Endothelial cell of umbilical vein (primary cell): ENCODE measurements at regions of chr4 and their contacts with region 1.

Region 1: DNA sequence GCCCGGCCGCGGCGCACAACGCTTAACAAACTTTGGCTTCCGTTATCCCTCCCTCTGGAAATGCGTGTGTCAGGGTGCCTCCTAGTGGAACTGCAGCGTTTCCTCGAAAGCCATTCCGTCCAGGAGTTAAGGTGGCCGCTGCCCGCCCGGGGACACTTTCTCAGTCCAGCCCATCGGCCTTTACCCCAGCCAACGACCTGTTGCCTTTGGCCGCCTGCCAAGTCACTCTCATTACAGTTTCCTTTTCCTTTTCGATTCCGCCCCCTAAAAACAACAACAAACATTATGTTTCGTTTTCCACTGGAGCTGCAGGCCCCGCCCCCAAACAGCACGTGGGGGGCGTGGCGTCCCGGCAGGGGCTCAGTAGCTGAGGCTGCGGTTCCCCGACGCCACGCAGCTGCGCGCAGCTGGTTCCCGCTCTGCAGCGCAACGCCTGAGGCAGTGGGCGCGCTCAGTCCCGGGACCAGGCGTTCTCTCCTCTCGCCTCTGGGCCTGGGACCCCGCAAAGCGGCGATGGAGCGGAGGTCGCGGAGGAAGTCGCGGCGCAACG is at the start of gene HERC5:
- DNase-seq: peak; percentile 97
- H3K4me3 ChIP-seq: peak within 1 kb of the TSS in 2 of 3 experiments; percentile 18 to 43
- H3K27ac ChIP-seq: no peak within 1 kb of the TSS
- H3K4me1 ChIP-seq: no peaks in the 10 kb centered on the region
- H3K27me3 ChIP-seq: peaks cover 8 to 28% of the 10 kb centered on the region in 2 experiments
- CTCF ChIP-seq: peak; percentile 52 to 70
- POLR2A ChIP-seq: no peak
- total RNA-seq, gene HERC5: 0.30 and 0.91 TPM in 2 replicates

Region 2: GRCh38 chr4:88033309-88033708 is 423.5 kb before region 1 on chr4:
- CTCF ChIA-PET with region 1: interaction called, 3 read pairs
- POLR2A ChIA-PET with region 1: no interaction called
- dilution Hi-C with region 1: no loop called
- intact Hi-C with region 1: loop called (anchors 10 kb)
- DNase-seq: peak; percentile 69
- H3K4me3 ChIP-seq: no peak overlapping the region
- H3K27ac ChIP-seq: no peak overlapping the region
- H3K4me1 ChIP-seq: no peaks in the 10 kb centered on the region
- H3K27me3 ChIP-seq: no peaks in the 10 kb centered on the region
- CTCF ChIP-seq: peak; percentile 43 to 55
- POLR2A ChIP-seq: no peak

Region 3: DNA sequence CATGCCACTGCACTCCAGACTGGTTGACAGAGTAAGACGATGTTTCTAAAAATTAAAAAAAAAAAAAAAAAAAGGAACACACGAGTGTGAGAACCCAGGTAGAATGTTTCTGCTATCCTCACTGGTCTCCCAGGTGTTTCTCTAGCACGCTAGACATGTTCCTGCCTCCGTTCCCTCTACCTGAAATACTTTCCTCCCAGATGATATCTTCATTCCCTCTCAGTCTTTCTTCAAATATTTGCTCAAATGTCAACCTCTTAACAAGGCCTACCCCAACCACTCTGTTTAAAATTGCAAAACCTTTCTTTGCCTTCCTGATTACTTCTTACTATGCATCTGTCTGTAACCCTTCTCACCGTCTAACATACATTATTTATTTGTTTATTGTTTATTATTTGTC is 238.9 kb before region 1 on chr4:
- CTCF ChIA-PET with region 1: interaction called, 49 read pairs
- POLR2A ChIA-PET with region 1: no interaction called
- dilution Hi-C with region 1: no loop called
- intact Hi-C with region 1: loop called (anchors 1 kb)
- DNase-seq: no peak
- H3K4me3 ChIP-seq: no peak overlapping the region
- H3K27ac ChIP-seq: no peak overlapping the region
- H3K4me1 ChIP-seq: no peaks in the 10 kb centered on the region
- H3K27me3 ChIP-seq: no peaks in the 10 kb centered on the region
- CTCF ChIP-seq: no peak
- POLR2A ChIP-seq: no peak

Region 4: DNA sequence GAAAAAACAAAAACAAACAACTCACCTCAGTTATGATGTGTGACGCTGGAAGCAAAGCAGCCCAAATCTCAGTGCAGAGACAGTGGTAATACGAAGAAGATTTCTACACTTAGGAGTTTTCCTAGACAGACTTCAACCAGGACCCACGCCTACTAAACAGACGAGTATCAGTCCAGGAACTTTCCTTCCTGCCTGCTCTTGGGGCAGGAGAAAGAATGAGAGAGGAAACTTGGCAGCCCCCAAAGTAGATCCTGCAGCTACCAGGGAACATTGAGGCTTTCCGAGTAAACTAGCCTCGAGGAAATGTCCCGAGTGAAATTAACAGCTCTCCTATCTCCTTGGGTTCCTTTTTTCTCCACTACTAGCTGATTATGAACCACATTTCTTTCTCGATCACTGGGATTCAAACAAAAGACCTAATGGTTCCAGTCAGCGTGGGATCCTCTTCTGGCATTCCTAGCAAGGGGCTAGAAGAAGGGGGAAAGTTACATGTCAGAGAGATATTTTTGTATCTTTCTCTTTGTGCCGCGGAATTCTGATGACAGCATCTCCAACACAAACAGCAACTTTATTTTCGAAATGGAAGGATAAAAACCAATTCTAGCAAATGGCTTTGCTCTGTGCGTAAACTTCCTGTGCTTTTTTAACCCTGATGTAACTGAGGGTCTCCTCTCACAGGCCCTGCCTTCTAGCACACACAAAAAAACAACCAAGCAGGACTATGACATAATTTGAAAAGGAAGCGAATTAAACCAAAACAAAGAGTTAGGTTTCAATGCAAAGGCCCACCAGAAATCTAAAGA is 225.7 kb before region 1 on chr4:
- CTCF ChIA-PET with region 1: no interaction called
- POLR2A ChIA-PET with region 1: no interaction called
- dilution Hi-C with region 1: no loop called
- intact Hi-C with region 1: no loop called
- DNase-seq: peak; percentile 79
- H3K4me3 ChIP-seq: peak overlapping the region in 2 of 3 experiments; percentile 21 to 50
- H3K27ac ChIP-seq: peak overlapping the region; percentile 89
- H3K4me1 ChIP-seq: peaks cover 16% of the 10 kb centered on the region
- H3K27me3 ChIP-seq: no peaks in the 10 kb centered on the region
- CTCF ChIP-seq: no peak
- POLR2A ChIP-seq: no peak

Region 5: GRCh38 chr4:88284439-88285234 is 172.2 kb before region 1 on chr4 and contains the start of gene PPM1K:
- CTCF ChIA-PET with region 1: interaction called, 17 read pairs
- POLR2A ChIA-PET with region 1: no interaction called
- dilution Hi-C with region 1: no loop called
- intact Hi-C with region 1: loop called (anchors 1 kb)
- DNase-seq: peak; percentile 99
- H3K4me3 ChIP-seq: peak within 1 kb of the TSS; percentile 71 to 88 (median 82)
- H3K27ac ChIP-seq: peak within 1 kb of the TSS; percentile 82
- H3K4me1 ChIP-seq: peaks cover 13% of the 10 kb centered on the region
- H3K27me3 ChIP-seq: no peaks in the 10 kb centered on the region
- CTCF ChIP-seq: peak in 1 of 2 donors; percentile 9
- POLR2A ChIP-seq: no peak
- total RNA-seq, gene PPM1K: 8.6 and 10.4 TPM in 2 replicates

Region 6: GRCh38 chr4:88378691-88379559 is 77.9 kb before region 1 on chr4 and contains the start of gene HERC6:
- CTCF ChIA-PET with region 1: interaction called, 29 read pairs
- POLR2A ChIA-PET with region 1: no interaction called
- dilution Hi-C with region 1: no loop called
- intact Hi-C with region 1: loop called (anchors 1 kb)
- DNase-seq: peak; percentile 81
- H3K4me3 ChIP-seq: peak within 1 kb of the TSS; percentile 76 to 91 (median 89)
- H3K27ac ChIP-seq: peak within 1 kb of the TSS; percentile 61
- H3K4me1 ChIP-seq: peaks cover 3% of the 10 kb centered on the region
- H3K27me3 ChIP-seq: peaks cover 0 to 3% of the 10 kb centered on the region in 2 experiments
- CTCF ChIP-seq: peak; percentile 72 to 91
- POLR2A ChIP-seq: no peak
- total RNA-seq, gene HERC6: 4.1 and 5.0 TPM in 2 replicates

Region 7: GRCh38 chr4:88489100-88489761 is 32.4 kb after region 1 on chr4:
- CTCF ChIA-PET with region 1: no interaction called
- POLR2A ChIA-PET with region 1: no interaction called
- dilution Hi-C with region 1: no loop called
- intact Hi-C with region 1: no loop called
- DNase-seq: no peak
- H3K4me3 ChIP-seq: no peak overlapping the region
- H3K27ac ChIP-seq: no peak overlapping the region
- H3K4me1 ChIP-seq: no peaks in the 10 kb centered on the region
- H3K27me3 ChIP-seq: no peaks in the 10 kb centered on the region
- CTCF ChIP-seq: no peak
- POLR2A ChIP-seq: no peak

Region 8: GRCh38 chr4:88523325-88524129 is 66.7 kb after region 1 on chr4 and contains the start of gene PYURF:
- CTCF ChIA-PET with region 1: interaction called, 3 read pairs
- POLR2A ChIA-PET with region 1: no interaction called
- dilution Hi-C with region 1: no loop called
- intact Hi-C with region 1: loop called (anchors 2 kb)
- DNase-seq: peak; percentile 95
- H3K4me3 ChIP-seq: peak within 1 kb of the TSS; percentile 91 to 93 (median 92)
- H3K27ac ChIP-seq: peak within 1 kb of the TSS; percentile 86
- H3K4me1 ChIP-seq: peaks cover 16% of the 10 kb centered on the region
- H3K27me3 ChIP-seq: no peaks in the 10 kb centered on the region
- CTCF ChIP-seq: no peak
- POLR2A ChIP-seq: peak; percentile 95
- total RNA-seq, gene PYURF: 79.7 and 81.8 TPM in 2 replicates

Region 9: GRCh38 chr4:88831031-88831430 is 374.2 kb after region 1 on chr4:
- CTCF ChIA-PET with region 1: no interaction called
- POLR2A ChIA-PET with region 1: no interaction called
- dilution Hi-C with region 1: no loop called
- intact Hi-C with region 1: no loop called
- DNase-seq: no peak
- H3K4me3 ChIP-seq: no peak overlapping the region
- H3K27ac ChIP-seq: no peak overlapping the region
- H3K4me1 ChIP-seq: no peaks in the 10 kb centered on the region
- H3K27me3 ChIP-seq: no peaks in the 10 kb centered on the region
- CTCF ChIP-seq: no peak
- POLR2A ChIP-seq: no peak